GM23248 (cell line): ENCODE measurements at regions of chr12 and their contacts with region 1.

Region 1: GRCh38 chr12:95336390-95337067 is 118.9 kb downstream of the VEZT start:
- DNase-seq: peak; percentile 83
- H3K4me3 ChIP-seq: peak overlapping the region; percentile 43; the same call in 1 of the 2 replicates
- H3K27ac ChIP-seq: no peak overlapping the region
- H3K4me1 ChIP-seq: peaks cover 36% of the 10 kb centered on the region
- H3K27me3 ChIP-seq: no peaks in the 10 kb centered on the region

Region 2: GRCh38 chr12:94133964-94134795 is 1202.3 kb before region 1 on chr12:
- in situ Hi-C with region 1: loop called (anchors 25 kb)
- DNase-seq: peak; percentile 82
- H3K4me3 ChIP-seq: peak overlapping the region; percentile 61
- H3K27ac ChIP-seq: no peak overlapping the region
- H3K4me1 ChIP-seq: no peaks in the 10 kb centered on the region
- H3K27me3 ChIP-seq: peaks cover 5% of the 10 kb centered on the region; the same call in 1 of the 2 replicates

Region 3: GRCh38 chr12:94560431-94561221 is 775.9 kb before region 1 on chr12:
- in situ Hi-C with region 1: loop called (anchors 25 kb)
- DNase-seq: peak; percentile 53
- H3K4me3 ChIP-seq: no peak overlapping the region
- H3K27ac ChIP-seq: no peak overlapping the region
- H3K4me1 ChIP-seq: no peaks in the 10 kb centered on the region
- H3K27me3 ChIP-seq: peaks cover 10% of the 10 kb centered on the region; the same call in 1 of the 2 replicates

Region 4: DNA sequence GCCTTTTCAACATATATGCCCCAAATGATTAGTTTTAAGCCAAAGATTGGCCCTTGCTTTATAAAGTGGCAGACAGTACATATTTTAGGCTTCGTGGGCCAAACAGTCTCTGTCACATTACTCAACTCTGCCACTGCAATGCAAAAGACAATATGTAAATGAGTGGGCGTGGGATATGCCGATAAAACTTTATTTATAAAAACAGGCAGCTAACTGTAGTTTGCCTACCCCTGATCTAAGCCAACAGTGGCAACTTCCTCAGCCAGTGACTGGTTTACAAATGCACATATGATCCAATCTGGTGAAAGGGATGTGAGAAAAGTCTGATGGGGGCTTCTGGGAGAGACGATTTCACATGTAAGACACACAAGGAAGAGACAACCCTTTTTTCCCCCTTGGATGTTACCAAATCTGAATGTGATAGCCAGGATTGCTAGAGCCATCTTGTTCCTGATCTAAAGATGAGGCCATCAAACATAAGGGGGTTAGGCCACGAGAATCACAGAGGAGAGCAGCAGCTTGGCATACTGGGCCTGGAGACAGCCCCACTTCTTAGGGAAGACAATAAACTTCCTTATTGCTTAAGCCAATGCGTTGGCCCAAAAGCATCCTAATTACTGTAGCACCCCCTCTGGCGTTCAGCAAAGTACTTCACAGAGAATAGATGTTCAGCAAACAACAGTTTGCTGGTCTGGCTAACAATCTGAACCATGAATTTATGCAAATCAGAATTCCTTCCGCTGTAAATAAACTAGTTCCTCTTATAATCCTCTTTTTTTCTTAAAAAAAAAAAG is 611.0 kb before region 1 on chr12:
- in situ Hi-C with region 1: loop called (anchors 25 kb)
- DNase-seq: peak; percentile 66
- H3K4me3 ChIP-seq: no peak overlapping the region
- H3K27ac ChIP-seq: no peak overlapping the region
- H3K4me1 ChIP-seq: no peaks in the 10 kb centered on the region
- H3K27me3 ChIP-seq: no peaks in the 10 kb centered on the region

Region 5: GRCh38 chr12:95117178-95117599 is 219.3 kb before region 1 on chr12:
- in situ Hi-C with region 1: loop called (anchors 5 kb)
- DNase-seq: peak; percentile 83
- H3K4me3 ChIP-seq: no peak overlapping the region
- H3K27ac ChIP-seq: no peak overlapping the region
- H3K4me1 ChIP-seq: peaks cover 36% of the 10 kb centered on the region
- H3K27me3 ChIP-seq: no peaks in the 10 kb centered on the region

Region 6: GRCh38 chr12:95224202-95225170 is 112.0 kb before region 1 on chr12:
- in situ Hi-C with region 1: loop called (anchors 10 kb)
- DNase-seq: peak; percentile 91
- H3K4me3 ChIP-seq: no peak overlapping the region
- H3K27ac ChIP-seq: peak overlapping the region; percentile 46
- H3K4me1 ChIP-seq: peaks cover 14% of the 10 kb centered on the region
- H3K27me3 ChIP-seq: no peaks in the 10 kb centered on the region

Region 7: GRCh38 chr12:95497031-95497430 is 160.5 kb after region 1 on chr12:
- in situ Hi-C with region 1: no loop called
- DNase-seq: no peak
- H3K4me3 ChIP-seq: no peak overlapping the region
- H3K27ac ChIP-seq: no peak overlapping the region
- H3K4me1 ChIP-seq: no peaks in the 10 kb centered on the region
- H3K27me3 ChIP-seq: no peaks in the 10 kb centered on the region